H1 (cell line): ENCODE measurements at regions of chr2 and their contacts with region 1.

Region 1: DNA sequence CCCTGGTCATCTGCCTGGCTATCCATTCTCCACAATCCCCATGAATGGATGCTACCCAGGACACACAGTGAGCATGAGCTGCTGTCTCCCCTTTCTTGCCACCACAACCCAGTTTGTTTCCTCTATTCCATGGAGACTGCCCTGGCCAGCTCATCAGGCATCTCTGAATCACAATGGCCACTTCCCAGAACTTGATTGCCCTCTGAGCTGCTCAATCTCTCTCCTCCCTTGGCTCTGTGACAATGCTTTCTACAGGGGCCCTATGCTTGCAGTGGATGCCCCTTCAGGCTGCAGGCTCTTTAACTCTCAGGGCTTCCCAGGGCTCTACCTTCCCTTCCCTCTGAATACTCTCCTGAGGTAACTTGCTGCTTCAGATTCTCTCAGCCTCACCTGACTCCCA is 14.4 kb upstream of the SLC4A5 start:
- DNase-seq: no peak
- H3K4me3 ChIP-seq: no peak overlapping the region
- H3K27ac ChIP-seq: no peak overlapping the region
- H3K4me1 ChIP-seq: peaks cover 0 to 2% (median 0%) of the 10 kb centered on the region in 4 experiments; a peak in 2 of 7 replicates
- H3K27me3 ChIP-seq: no peaks in the 10 kb centered on the region
- CTCF ChIP-seq: no peak
- EP300 ChIP-seq: no peak
- POLR2A ChIP-seq: no peak
- RAD21 ChIP-seq: no peak

Region 2: GRCh38 chr2:74206180-74206688 is 151.4 kb before region 1 on chr2:
- CTCF ChIA-PET with region 1: no interaction called
- POLR2A ChIA-PET with region 1: no interaction called
- DNase-seq: no peak
- H3K4me3 ChIP-seq: no peak overlapping the region
- H3K27ac ChIP-seq: no peak overlapping the region
- H3K4me1 ChIP-seq: peaks cover 2 to 18% (median 14%) of the 10 kb centered on the region in 4 experiments
- H3K27me3 ChIP-seq: no peaks in the 10 kb centered on the region
- CTCF ChIP-seq: no peak
- EP300 ChIP-seq: no peak
- POLR2A ChIP-seq: peak in 1 of 2 experiments; percentile 37; a peak in 2 of 3 replicates
- RAD21 ChIP-seq: no peak

Region 3: DNA sequence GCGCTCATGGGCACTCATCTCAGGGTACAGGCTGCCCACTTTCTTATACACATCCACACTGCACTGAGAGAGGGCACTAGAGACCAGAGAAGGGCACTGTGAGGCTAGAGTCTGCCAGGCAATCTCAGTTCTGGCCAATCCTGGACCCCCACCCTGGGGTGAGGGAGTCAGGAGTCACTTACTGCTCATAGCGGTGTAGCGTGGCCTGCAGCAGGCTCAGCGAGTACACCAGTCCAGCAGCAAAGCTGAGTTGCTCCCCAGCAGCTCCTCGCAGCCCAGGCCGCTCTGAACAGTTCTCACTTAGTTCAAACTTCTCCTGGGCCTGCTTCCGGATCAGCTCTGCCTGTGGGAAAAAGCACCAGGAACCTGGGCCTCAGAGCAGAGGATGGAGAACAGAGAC is 10.2 kb after region 1 on chr2:
- CTCF ChIA-PET with region 1: interaction called, 4 read pairs
- POLR2A ChIA-PET with region 1: interaction called, 18 read pairs
- DNase-seq: no peak
- H3K4me3 ChIP-seq: no peak overlapping the region
- H3K27ac ChIP-seq: no peak overlapping the region
- H3K4me1 ChIP-seq: no peaks in the 10 kb centered on the region
- H3K27me3 ChIP-seq: no peaks in the 10 kb centered on the region
- CTCF ChIP-seq: no peak
- EP300 ChIP-seq: no peak
- POLR2A ChIP-seq: no peak
- RAD21 ChIP-seq: no peak